CD4-positive, alpha-beta memory T cell (primary cell): ENCODE measurements at regions of chr6 and their contacts with region 1.

Region 1: DNA sequence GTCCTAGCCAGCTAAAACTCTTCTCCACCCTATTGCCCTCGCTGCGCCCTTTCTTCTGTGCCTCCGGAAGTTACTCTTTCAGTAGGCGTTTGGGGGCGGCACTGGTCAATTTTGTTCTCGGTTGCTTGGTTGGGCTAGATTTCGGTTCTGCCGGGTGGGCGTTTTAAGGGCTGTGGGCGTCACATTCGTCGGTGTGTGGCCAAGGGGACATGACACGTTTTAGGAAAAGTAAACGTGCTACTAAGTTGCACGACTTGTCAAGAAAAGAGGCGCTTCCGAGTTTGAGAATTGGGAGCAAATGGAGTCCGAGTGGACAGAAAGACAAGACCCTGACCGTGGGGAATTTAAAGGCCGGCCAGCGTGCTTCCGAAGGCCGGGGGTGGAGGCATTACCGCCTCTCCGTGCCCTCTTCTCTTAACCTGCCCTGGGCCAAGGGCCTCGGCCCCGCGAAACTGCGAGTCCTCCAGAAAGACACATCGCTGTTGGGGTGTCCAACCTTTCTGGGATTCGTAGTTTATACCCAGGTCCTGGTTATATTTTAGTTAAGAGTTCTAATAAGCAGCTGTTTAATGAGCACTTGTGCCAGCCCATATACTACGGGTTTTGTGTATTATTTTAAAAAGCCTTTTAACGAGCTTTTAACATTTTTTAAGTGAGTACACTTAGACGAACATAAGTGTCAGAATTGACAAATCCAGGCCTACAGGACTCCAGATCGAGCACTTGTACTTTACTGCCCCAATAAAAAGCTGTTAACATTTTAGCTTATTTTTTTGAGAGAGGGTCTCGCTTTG is 661 bp upstream of the BAG6 start:
- DNase-seq: peak in 1 of 5 donors; percentile 93
- H3K4me3 ChIP-seq: peak overlapping the region; percentile 85 to 92
- H3K4me3 Mint-ChIP-seq: peak overlapping the region; percentile 96 to 100 (median 98)
- H3K27ac ChIP-seq: peak overlapping the region; percentile 93
- H3K27ac Mint-ChIP-seq: peak overlapping the region; percentile 99 to 100 (median 100)
- H3K4me1 ChIP-seq: peaks cover 33% of the 10 kb centered on the region
- H3K4me1 Mint-ChIP-seq: peaks cover 35 to 72% (median 46%) of the 10 kb centered on the region in 4 donors
- H3K27me3 ChIP-seq: no peaks in the 10 kb centered on the region
- H3K27me3 Mint-ChIP-seq: no peaks in the 10 kb centered on the region

Region 2: DNA sequence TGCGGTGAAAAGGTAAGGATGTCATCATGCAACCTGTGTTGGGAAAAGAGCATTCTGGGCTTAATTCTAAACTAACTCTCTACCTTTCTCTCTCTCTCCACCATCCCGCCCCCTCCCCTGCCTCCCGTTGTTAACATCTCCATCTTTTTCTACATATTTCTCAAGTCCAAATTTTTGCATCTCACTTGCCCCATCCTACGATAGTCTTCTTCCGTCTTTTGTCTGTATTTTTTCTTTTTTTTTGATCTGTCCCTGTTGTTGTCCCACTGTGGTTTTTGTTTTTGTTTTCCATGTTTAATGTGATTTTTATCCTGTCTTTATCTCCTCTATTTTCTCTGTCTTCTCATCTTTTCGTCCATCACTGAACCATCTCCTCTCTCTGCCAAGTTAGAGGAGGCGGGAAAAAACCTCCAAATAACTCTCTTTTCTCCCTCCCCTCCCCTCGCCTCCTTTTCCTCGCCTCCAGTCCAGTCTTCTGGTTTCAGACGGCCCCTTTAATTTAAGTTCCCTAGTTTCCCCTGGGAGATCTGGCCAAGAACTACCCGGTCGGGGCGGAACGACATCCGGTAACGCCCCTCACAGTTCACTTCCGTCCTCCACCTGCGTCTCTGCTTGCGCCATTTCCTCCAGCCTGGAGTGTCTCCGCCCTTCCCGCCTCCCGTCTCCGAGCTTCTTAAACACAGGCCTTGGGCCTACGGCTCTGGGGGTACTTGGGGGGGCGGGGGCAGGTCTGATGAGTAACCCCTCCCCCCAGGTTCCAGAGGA is 106.0 kb before region 1 on chr6 and contains the start of gene NFKBIL1:
- CTCF ChIA-PET with region 1: interaction called, 5 read pairs
- POLR2A ChIA-PET with region 1: interaction called, 24 read pairs
- intact Hi-C with region 1: loop called (anchors 1 kb)
- DNase-seq: peak; percentile 83 to 91 (median 85)
- H3K4me3 ChIP-seq: peak within 1 kb of the TSS; percentile 55 to 79
- H3K4me3 Mint-ChIP-seq: peak within 1 kb of the TSS; percentile 85 to 93 (median 88)
- H3K27ac ChIP-seq: peak within 1 kb of the TSS; percentile 85
- H3K27ac Mint-ChIP-seq: peak within 1 kb of the TSS; percentile 93 to 99 (median 97)
- H3K4me1 ChIP-seq: peaks cover 45% of the 10 kb centered on the region
- H3K4me1 Mint-ChIP-seq: peaks cover 24 to 49% (median 36%) of the 10 kb centered on the region in 4 donors
- H3K27me3 ChIP-seq: no peaks in the 10 kb centered on the region
- H3K27me3 Mint-ChIP-seq: no peaks in the 10 kb centered on the region
- total RNA-seq, gene NFKBIL1: 9.8 to 13.3 TPM

Region 3: DNA sequence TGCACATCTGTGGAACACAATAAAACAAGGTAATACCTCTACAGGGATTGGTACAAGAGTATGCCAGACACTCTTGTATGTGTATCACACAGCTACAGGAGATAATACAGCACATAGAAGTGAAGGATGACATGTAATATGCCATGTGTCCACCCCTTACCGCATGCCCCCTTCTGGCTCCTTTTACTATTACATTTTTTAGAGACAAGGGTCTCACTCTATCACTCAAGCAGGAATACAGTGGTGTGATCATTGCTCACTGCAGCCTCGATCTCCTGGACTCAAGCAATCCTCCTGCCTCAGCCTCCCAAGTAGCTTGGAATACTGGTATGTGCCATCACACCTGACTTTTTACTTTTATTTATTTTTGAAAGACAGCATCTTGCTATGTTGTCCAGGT is 56.1 kb before region 1 on chr6:
- CTCF ChIA-PET with region 1: interaction called, 7 read pairs
- POLR2A ChIA-PET with region 1: interaction called, 10 read pairs
- intact Hi-C with region 1: no loop called
- DNase-seq: peak; percentile 66 to 79 (median 75)
- H3K4me3 ChIP-seq: no peak overlapping the region
- H3K4me3 Mint-ChIP-seq: peak overlapping the region in 5 of 8 donors; percentile 33 to 66 (median 43)
- H3K27ac ChIP-seq: no peak overlapping the region
- H3K27ac Mint-ChIP-seq: peak overlapping the region; percentile 60 to 89 (median 77)
- H3K4me1 ChIP-seq: peaks cover 60% of the 10 kb centered on the region
- H3K4me1 Mint-ChIP-seq: peaks cover 27 to 56% (median 45%) of the 10 kb centered on the region in 4 donors
- H3K27me3 ChIP-seq: no peaks in the 10 kb centered on the region
- H3K27me3 Mint-ChIP-seq: no peaks in the 10 kb centered on the region

Region 4: GRCh38 chr6:31665501-31666336 is 12.6 kb after region 1 on chr6 and contains the start of gene CSNK2B:
- CTCF ChIA-PET with region 1: interaction called, 28 read pairs
- POLR2A ChIA-PET with region 1: interaction called, 269 read pairs
- intact Hi-C with region 1: loop called (anchors 1 kb)
- DNase-seq: peak; percentile 97 to 99 (median 98)
- H3K4me3 ChIP-seq: peak within 1 kb of the TSS; percentile 94 to 96
- H3K4me3 Mint-ChIP-seq: peak within 1 kb of the TSS; percentile 89 to 100 (median 96)
- H3K27ac ChIP-seq: peak within 1 kb of the TSS; percentile 92
- H3K27ac Mint-ChIP-seq: peak within 1 kb of the TSS; percentile 94 to 100 (median 99)
- H3K4me1 ChIP-seq: peaks cover 59% of the 10 kb centered on the region
- H3K4me1 Mint-ChIP-seq: peaks cover 32 to 67% (median 49%) of the 10 kb centered on the region in 4 donors
- H3K27me3 ChIP-seq: no peaks in the 10 kb centered on the region
- H3K27me3 Mint-ChIP-seq: no peaks in the 10 kb centered on the region
- total RNA-seq, gene CSNK2B: 141 to 148 TPM

Region 5: GRCh38 chr6:31806465-31807272 is 153.5 kb after region 1 on chr6 and contains the start of gene LSM2:
- CTCF ChIA-PET with region 1: no interaction called
- POLR2A ChIA-PET with region 1: interaction called, 14 read pairs
- intact Hi-C with region 1: no loop called
- DNase-seq: peak; percentile 97 to 98 (median 97)
- H3K4me3 ChIP-seq: peak within 1 kb of the TSS; percentile 84 to 89
- H3K4me3 Mint-ChIP-seq: peak within 1 kb of the TSS; percentile 86 to 97 (median 90)
- H3K27ac ChIP-seq: peak within 1 kb of the TSS; percentile 80
- H3K27ac Mint-ChIP-seq: peak within 1 kb of the TSS; percentile 89 to 97 (median 93)
- H3K4me1 ChIP-seq: peaks cover 23% of the 10 kb centered on the region
- H3K4me1 Mint-ChIP-seq: peaks cover 11 to 37% (median 27%) of the 10 kb centered on the region in 4 donors
- H3K27me3 ChIP-seq: no peaks in the 10 kb centered on the region
- H3K27me3 Mint-ChIP-seq: no peaks in the 10 kb centered on the region
- total RNA-seq, gene LSM2: 30.0 to 34.6 TPM

Region 6: GRCh38 chr6:31834434-31835198 is 181.5 kb after region 1 on chr6:
- CTCF ChIA-PET with region 1: interaction called, 4 read pairs
- POLR2A ChIA-PET with region 1: interaction called, 31 read pairs
- intact Hi-C with region 1: no loop called
- DNase-seq: peak; percentile 80 to 84 (median 81)
- H3K4me3 ChIP-seq: peak overlapping the region; percentile 75 to 88
- H3K4me3 Mint-ChIP-seq: peak overlapping the region; percentile 88 to 99 (median 96)
- H3K27ac ChIP-seq: peak overlapping the region; percentile 88
- H3K27ac Mint-ChIP-seq: peak overlapping the region; percentile 97 to 99 (median 99)
- H3K4me1 ChIP-seq: peaks cover 61% of the 10 kb centered on the region
- H3K4me1 Mint-ChIP-seq: peaks cover 27 to 65% (median 48%) of the 10 kb centered on the region in 4 donors
- H3K27me3 ChIP-seq: no peaks in the 10 kb centered on the region
- H3K27me3 Mint-ChIP-seq: no peaks in the 10 kb centered on the region

Region 7: GRCh38 chr6:32195652-32195901 is 542.5 kb after region 1 on chr6:
- CTCF ChIA-PET with region 1: no interaction called
- POLR2A ChIA-PET with region 1: interaction called, 10 read pairs
- intact Hi-C with region 1: no loop called
- DNase-seq: peak; percentile 99 to 100 (median 100)
- H3K4me3 ChIP-seq: peak overlapping the region in 1 of 2 donors; percentile 97
- H3K4me3 Mint-ChIP-seq: peak overlapping the region; percentile 93 to 100 (median 98)
- H3K27ac ChIP-seq: peak overlapping the region; percentile 98
- H3K27ac Mint-ChIP-seq: peak overlapping the region; percentile 97 to 100 (median 99)
- H3K4me1 ChIP-seq: peaks cover 33% of the 10 kb centered on the region
- H3K4me1 Mint-ChIP-seq: peaks cover 23 to 58% (median 27%) of the 10 kb centered on the region in 4 donors
- H3K27me3 ChIP-seq: no peaks in the 10 kb centered on the region
- H3K27me3 Mint-ChIP-seq: peaks cover 0 to 2% of the 10 kb centered on the region in 2 donors